A549 (cell line): ENCODE measurements at regions of chr14 and their contacts with region 1.

Region 1: GRCh38 chr14:39232554-39233415 is 930 bp upstream of the MIA2 start:
- DNase-seq: peak in 1 of 2 experiments; percentile 18
- ATAC-seq: peak; percentile 40 to 62; a peak in 3 of 6 replicates
- H3K4me3 ChIP-seq: no peak overlapping the region
- H3K27ac ChIP-seq: peak overlapping the region; percentile 8 to 55; a peak in 5 of 6 replicates
- H3K4me1 ChIP-seq: peaks cover 24% of the 10 kb centered on the region
- CTCF ChIP-seq: no peak
- EP300 ChIP-seq: no peak
- POLR2A ChIP-seq: no peak
- RAD21 ChIP-seq: no peak

Region 2: GRCh38 chr14:38605193-38606114 is 627.3 kb before region 1 on chr14:
- CTCF ChIA-PET with region 1: no interaction called
- POLR2A ChIA-PET with region 1: no interaction called
- DNase-seq: no peak
- ATAC-seq: no peak
- H3K4me3 ChIP-seq: no peak overlapping the region
- H3K27ac ChIP-seq: no peak overlapping the region
- H3K4me1 ChIP-seq: no peaks in the 10 kb centered on the region
- CTCF ChIP-seq: no peak
- EP300 ChIP-seq: no peak
- POLR2A ChIP-seq: no peak
- RAD21 ChIP-seq: no peak

Region 3: GRCh38 chr14:39099748-39100147 is 133.0 kb before region 1 on chr14:
- CTCF ChIA-PET with region 1: no interaction called
- POLR2A ChIA-PET with region 1: no interaction called
- DNase-seq: no peak
- ATAC-seq: no peak
- H3K4me3 ChIP-seq: no peak overlapping the region
- H3K27ac ChIP-seq: no peak overlapping the region
- H3K4me1 ChIP-seq: peaks cover 25% of the 10 kb centered on the region
- CTCF ChIP-seq: no peak
- EP300 ChIP-seq: no peak
- POLR2A ChIP-seq: no peak
- RAD21 ChIP-seq: no peak

Region 4: GRCh38 chr14:39310051-39310450 is 77.3 kb after region 1 on chr14:
- CTCF ChIA-PET with region 1: no interaction called
- POLR2A ChIA-PET with region 1: no interaction called
- DNase-seq: no peak
- ATAC-seq: no peak
- H3K4me3 ChIP-seq: no peak overlapping the region
- H3K27ac ChIP-seq: no peak overlapping the region
- H3K4me1 ChIP-seq: no peaks in the 10 kb centered on the region
- CTCF ChIP-seq: no peak
- EP300 ChIP-seq: no peak
- POLR2A ChIP-seq: no peak
- RAD21 ChIP-seq: no peak

Region 5: DNA sequence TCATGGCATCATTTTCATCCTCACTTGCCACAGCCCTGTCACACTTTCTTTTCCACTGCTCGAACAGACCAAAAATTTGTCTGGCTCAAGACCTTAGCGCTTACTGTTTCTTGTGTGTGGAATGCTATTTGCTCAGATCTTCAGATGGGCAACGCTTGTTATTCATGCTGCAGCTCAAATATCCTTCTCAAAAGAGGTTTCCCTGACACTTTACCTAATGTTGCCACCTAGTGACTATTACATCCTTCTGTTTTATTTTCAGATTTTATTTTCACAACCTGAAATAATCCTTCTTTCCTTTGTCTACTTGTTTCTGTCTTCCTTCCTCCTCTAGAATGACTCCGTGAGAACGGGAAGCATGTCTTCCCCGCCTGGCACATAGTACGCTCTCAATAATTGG is 193.8 kb after region 1 on chr14:
- CTCF ChIA-PET with region 1: interaction called, 13 read pairs
- POLR2A ChIA-PET with region 1: no interaction called
- DNase-seq: peak in 1 of 2 experiments; percentile 51
- ATAC-seq: peak; percentile 40 to 48; a peak in 3 of 6 replicates
- H3K4me3 ChIP-seq: no peak overlapping the region
- H3K27ac ChIP-seq: no peak overlapping the region
- H3K4me1 ChIP-seq: peaks cover 20% of the 10 kb centered on the region; the same call in 2 of the 3 replicates
- CTCF ChIP-seq: peak; percentile 54
- EP300 ChIP-seq: no peak
- POLR2A ChIP-seq: no peak
- RAD21 ChIP-seq: peak; percentile 65 to 67